WTC11 (cell line): ENCODE measurements at regions of chr14 and their contacts with region 1.

Region 1: DNA sequence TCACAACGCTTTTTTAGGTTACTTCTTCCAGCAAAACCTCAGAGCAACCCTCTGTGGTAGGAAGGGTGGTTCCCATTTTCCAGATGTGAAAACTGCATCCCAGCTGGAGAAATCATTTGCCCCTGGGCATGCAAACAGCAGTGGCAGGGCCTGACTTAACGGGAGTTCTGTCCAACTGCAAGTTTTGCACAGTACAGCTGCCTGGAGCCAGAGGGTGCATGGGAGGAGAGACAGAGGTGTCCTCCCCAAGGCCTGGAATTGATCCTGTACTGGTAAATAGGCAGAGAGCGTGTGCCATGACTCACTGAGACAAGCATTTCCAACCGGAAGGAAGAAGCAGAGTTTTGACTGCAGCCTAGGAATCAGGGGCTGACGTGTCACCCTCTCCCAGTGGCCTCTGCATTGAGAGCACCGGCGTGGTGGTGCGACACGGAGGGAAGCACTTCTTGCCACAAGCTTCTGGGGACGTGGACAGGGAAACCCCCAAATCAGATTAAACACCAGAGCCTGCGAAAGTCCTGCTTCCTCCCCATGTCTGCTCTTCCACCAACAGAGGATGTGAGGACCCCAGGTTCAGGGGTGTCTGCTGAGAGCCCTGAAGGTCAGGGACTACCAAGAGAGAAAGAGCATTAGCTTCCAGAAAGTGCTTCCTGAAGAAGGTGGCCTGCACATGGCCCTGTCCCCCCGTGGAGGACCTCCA is 19.0 kb upstream of the SERPINA4 start:
- DNase-seq: no peak
- ATAC-seq: no peak
- H3K4me3 Mint-ChIP-seq: no peak overlapping the region
- H3K27ac Mint-ChIP-seq: no peak overlapping the region
- H3K4me1 Mint-ChIP-seq: peaks cover 36% of the 10 kb centered on the region
- H3K27me3 Mint-ChIP-seq: no peaks in the 10 kb centered on the region; the same call in 1 of the 2 replicates
- CTCF ChIP-seq: no peak

Region 2: DNA sequence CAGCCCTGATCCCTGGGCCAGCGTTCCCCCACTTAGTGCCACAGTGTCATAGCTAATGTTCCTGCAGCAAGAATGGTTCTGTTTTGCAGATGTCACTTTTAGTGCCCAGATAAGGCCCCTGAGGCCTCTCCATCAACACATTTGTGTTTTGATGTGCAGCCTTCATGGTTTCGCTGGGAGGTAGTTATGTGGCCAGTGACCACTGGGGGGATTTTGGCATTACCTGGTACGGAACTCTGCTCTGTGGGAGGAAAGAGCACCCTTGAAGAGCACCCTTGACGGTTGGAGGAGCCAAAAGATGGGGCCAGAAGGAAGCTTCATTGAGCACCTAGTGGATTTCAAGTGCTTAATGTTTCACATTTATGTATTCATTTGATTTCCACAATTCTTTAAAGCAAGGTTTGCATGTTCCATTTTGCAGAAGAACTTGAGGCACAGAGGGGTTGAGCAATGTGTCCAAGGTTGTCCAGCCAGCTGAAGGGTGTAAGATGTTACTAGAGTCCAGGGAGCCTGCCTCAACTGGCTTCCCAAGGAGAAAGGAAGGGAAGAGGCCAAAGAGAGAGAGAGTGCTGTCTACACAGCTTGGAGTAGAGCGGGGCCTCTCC is 102.7 kb before region 1 on chr14:
- CTCF ChIA-PET with region 1: interaction called, 16 read pairs
- POLR2A ChIA-PET with region 1: no interaction called
- DNase-seq: no peak
- ATAC-seq: peak; percentile 51; the same call in 1 of the 2 replicates
- H3K4me3 Mint-ChIP-seq: no peak overlapping the region
- H3K27ac Mint-ChIP-seq: no peak overlapping the region
- H3K4me1 Mint-ChIP-seq: peaks cover 5% of the 10 kb centered on the region; the same call in 1 of the 2 replicates
- H3K27me3 Mint-ChIP-seq: no peaks in the 10 kb centered on the region
- CTCF ChIP-seq: no peak

Region 3: DNA sequence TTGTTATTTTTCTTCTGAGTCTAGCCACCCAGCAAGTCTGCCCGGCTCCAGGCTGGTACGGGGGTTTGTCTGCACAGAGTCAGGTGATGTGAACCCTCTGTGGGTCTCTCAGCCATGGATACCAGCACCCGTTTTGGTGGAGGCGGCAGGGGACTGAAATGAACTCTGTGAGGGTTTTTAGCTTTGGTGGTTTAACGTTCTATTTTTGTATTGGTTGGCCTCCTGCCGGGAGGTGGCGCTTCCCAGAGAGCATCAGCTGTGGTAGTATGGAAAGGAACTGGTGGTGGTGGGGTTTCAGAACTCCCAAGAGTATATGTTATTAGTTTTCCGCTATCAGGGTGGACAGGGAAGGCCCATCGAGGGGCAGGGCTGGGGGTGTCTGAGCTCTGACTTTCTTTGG is 13.7 kb after region 1 on chr14:
- CTCF ChIA-PET with region 1: no interaction called
- POLR2A ChIA-PET with region 1: no interaction called
- DNase-seq: no peak
- ATAC-seq: no peak
- H3K4me3 Mint-ChIP-seq: no peak overlapping the region
- H3K27ac Mint-ChIP-seq: no peak overlapping the region
- H3K4me1 Mint-ChIP-seq: peaks cover 3% of the 10 kb centered on the region; the same call in 1 of the 2 replicates
- H3K27me3 Mint-ChIP-seq: no peaks in the 10 kb centered on the region
- CTCF ChIP-seq: no peak